CD8-positive, alpha-beta T cell (primary cell): ENCODE measurements at regions of chr14 and their contacts with region 1.

Region 1: GRCh38 chr14:72904840-72905561 is 11.1 kb upstream of the DPF3 start:
- DNase-seq: peak; percentile 23 to 80 (median 66)
- ATAC-seq: peak; percentile 78
- H3K4me3 ChIP-seq: no peak overlapping the region
- H3K4me3 Mint-ChIP-seq: no peak overlapping the region
- H3K27ac ChIP-seq: no peak overlapping the region
- H3K27ac Mint-ChIP-seq: no peak overlapping the region
- H3K4me1 ChIP-seq: no peaks in the 10 kb centered on the region
- H3K4me1 Mint-ChIP-seq: no peaks in the 10 kb centered on the region
- H3K27me3 ChIP-seq: peaks cover 0 to 3% of the 10 kb centered on the region in 2 experiments
- H3K27me3 Mint-ChIP-seq: peaks cover 21% of the 10 kb centered on the region
- CTCF ChIP-seq: peak; percentile 95

Region 2: DNA sequence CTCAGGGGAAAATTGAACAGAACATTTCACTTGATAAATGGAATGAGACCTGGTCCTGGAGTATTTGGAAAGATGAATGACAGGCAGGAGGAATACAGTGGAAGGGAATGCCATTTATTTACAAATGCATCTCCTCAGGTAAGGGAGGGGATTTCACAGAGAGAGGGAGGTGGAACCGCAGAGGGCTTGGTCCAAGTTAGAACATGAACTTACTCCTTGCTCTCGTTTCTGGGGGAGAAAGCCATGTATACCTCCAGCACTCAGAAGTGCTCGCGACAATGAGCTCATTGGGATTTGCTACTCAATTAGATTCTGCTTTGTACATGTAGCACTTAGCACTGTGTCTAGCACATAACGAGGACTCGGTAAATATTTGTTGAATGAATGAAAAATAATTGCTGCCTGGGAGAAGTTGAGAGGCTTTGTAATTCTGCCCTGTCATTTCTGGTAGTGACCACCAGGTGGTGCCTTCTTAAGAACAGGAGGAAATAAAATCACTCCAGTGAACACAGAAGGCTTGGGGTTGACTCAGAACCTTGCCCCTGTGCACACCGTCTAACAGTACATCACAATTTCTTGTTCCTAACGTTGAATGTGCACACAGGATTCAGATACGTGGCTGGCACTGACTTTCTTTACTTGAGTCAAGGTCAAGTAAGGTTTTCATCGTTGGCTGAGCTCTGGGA is 881.1 kb before region 1 on chr14:
- CTCF ChIA-PET with region 1: interaction called, 14 read pairs
- POLR2A ChIA-PET with region 1: no interaction called
- intact Hi-C with region 1: loop called in 1 of 2 experiments (anchors 2 kb)
- DNase-seq: peak in 7 of 9 experiments; percentile 3 to 53 (median 22)
- ATAC-seq: no peak
- H3K4me3 ChIP-seq: no peak overlapping the region
- H3K4me3 Mint-ChIP-seq: no peak overlapping the region
- H3K27ac ChIP-seq: no peak overlapping the region
- H3K27ac Mint-ChIP-seq: no peak overlapping the region
- H3K4me1 ChIP-seq: no peaks in the 10 kb centered on the region
- H3K4me1 Mint-ChIP-seq: no peaks in the 10 kb centered on the region
- H3K27me3 ChIP-seq: no peaks in the 10 kb centered on the region
- H3K27me3 Mint-ChIP-seq: peaks cover 25% of the 10 kb centered on the region
- CTCF ChIP-seq: peak; percentile 49

Region 3: DNA sequence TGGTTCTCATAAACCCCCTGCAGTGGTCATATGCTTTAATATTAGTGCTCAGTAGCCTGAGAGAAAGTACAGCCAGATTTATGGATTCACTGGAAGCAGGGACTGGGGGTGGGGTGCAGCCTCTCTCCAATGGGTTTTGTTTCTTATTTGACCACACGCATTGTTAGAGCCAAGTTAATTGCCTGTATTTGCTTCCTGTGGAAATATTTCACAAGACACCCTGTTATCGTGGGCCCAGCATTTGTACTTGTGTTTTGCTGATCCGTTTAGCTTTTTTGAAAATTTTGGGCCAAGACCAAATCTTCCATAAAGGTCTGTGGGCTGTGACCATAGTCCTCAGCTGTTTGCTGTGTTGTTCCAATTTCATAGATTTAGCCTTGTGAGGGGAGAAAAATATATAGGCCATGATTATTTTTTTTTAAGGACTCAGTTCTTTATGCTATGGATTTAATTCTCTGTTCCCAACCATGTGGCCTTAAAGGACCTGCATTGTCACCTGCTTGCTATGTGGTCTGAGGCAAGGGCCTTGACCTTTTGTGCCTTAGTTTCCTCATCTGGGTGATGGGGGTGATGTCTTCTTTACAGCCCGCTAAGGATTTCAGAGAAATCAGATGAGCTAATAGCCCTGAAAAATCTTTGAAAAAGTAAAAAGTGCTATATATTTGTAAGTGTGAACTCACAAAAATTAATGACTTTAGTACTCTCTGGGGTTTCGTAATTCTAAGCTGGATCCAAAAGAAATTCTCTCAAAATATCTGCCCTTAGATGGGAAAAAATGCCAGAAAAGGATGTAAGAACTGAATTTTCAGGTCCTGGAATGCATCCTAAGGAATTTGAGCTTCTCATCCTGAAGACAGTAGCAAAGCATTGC is 381.3 kb before region 1 on chr14:
- CTCF ChIA-PET with region 1: interaction called, 343 read pairs
- POLR2A ChIA-PET with region 1: no interaction called
- intact Hi-C with region 1: no loop called
- DNase-seq: no peak
- ATAC-seq: no peak
- H3K4me3 ChIP-seq: no peak overlapping the region
- H3K4me3 Mint-ChIP-seq: no peak overlapping the region
- H3K27ac ChIP-seq: no peak overlapping the region
- H3K27ac Mint-ChIP-seq: no peak overlapping the region
- H3K4me1 ChIP-seq: peaks cover 25% of the 10 kb centered on the region
- H3K4me1 Mint-ChIP-seq: peaks cover 39% of the 10 kb centered on the region
- H3K27me3 ChIP-seq: peaks cover 0 to 3% of the 10 kb centered on the region in 2 experiments
- H3K27me3 Mint-ChIP-seq: peaks cover 2% of the 10 kb centered on the region
- CTCF ChIP-seq: no peak

Region 4: GRCh38 chr14:72736314-72736715 is 168.7 kb before region 1 on chr14:
- CTCF ChIA-PET with region 1: interaction called, 3 read pairs
- POLR2A ChIA-PET with region 1: no interaction called
- intact Hi-C with region 1: loop called in 1 of 2 experiments (anchors 5 kb)
- DNase-seq: no peak
- ATAC-seq: no peak
- H3K4me3 ChIP-seq: no peak overlapping the region
- H3K4me3 Mint-ChIP-seq: no peak overlapping the region
- H3K27ac ChIP-seq: no peak overlapping the region
- H3K27ac Mint-ChIP-seq: no peak overlapping the region
- H3K4me1 ChIP-seq: no peaks in the 10 kb centered on the region
- H3K4me1 Mint-ChIP-seq: no peaks in the 10 kb centered on the region
- H3K27me3 ChIP-seq: no peaks in the 10 kb centered on the region
- H3K27me3 Mint-ChIP-seq: no peaks in the 10 kb centered on the region
- CTCF ChIP-seq: no peak

Region 5: GRCh38 chr14:72917094-72917802 is 12.2 kb after region 1 on chr14:
- CTCF ChIA-PET with region 1: interaction called, 12 read pairs
- POLR2A ChIA-PET with region 1: no interaction called
- intact Hi-C with region 1: no loop called
- DNase-seq: no peak
- ATAC-seq: no peak
- H3K4me3 ChIP-seq: no peak overlapping the region
- H3K4me3 Mint-ChIP-seq: no peak overlapping the region
- H3K27ac ChIP-seq: no peak overlapping the region
- H3K27ac Mint-ChIP-seq: no peak overlapping the region
- H3K4me1 ChIP-seq: no peaks in the 10 kb centered on the region
- H3K4me1 Mint-ChIP-seq: no peaks in the 10 kb centered on the region
- H3K27me3 ChIP-seq: peaks cover 0 to 10% of the 10 kb centered on the region in 2 experiments
- H3K27me3 Mint-ChIP-seq: peaks cover 19% of the 10 kb centered on the region
- CTCF ChIP-seq: no peak

Region 6: GRCh38 chr14:72990171-72990570 is 85.2 kb after region 1 on chr14:
- CTCF ChIA-PET with region 1: no interaction called
- POLR2A ChIA-PET with region 1: no interaction called
- intact Hi-C with region 1: no loop called
- DNase-seq: no peak
- ATAC-seq: no peak
- H3K4me3 ChIP-seq: no peak overlapping the region
- H3K4me3 Mint-ChIP-seq: no peak overlapping the region
- H3K27ac ChIP-seq: no peak overlapping the region
- H3K27ac Mint-ChIP-seq: no peak overlapping the region
- H3K4me1 ChIP-seq: no peaks in the 10 kb centered on the region
- H3K4me1 Mint-ChIP-seq: no peaks in the 10 kb centered on the region
- H3K27me3 ChIP-seq: no peaks in the 10 kb centered on the region
- H3K27me3 Mint-ChIP-seq: no peaks in the 10 kb centered on the region
- CTCF ChIP-seq: no peak